ENCODE measurements at regions of chr11 and their contacts with region 1.

Region 1: GRCh38 chr11:123338330-123339005 is 91.6 kb upstream of the GRAMD1B start:
- DNase-seq: no peak
- ATAC-seq: peak; percentile 43
- H3K4me3 ChIP-seq: no peak overlapping the region
- H3K27ac ChIP-seq: no peak overlapping the region
- H3K4me1 ChIP-seq: no peaks in the 10 kb centered on the region
- H3K27me3 ChIP-seq: no peaks in the 10 kb centered on the region
- CTCF ChIP-seq: no peak
- EP300 ChIP-seq: no peak
- POLR2A ChIP-seq: no peak
- RAD21 ChIP-seq: no peak

Region 2: GRCh38 chr11:123286761-123287160 is 51.7 kb before region 1 on chr11:
- CTCF ChIA-PET with region 1: no interaction called
- POLR2A ChIA-PET with region 1: no interaction called
- RAD21 ChIA-PET with region 1: no interaction called
- SMC1A ChIA-PET with region 1: no interaction called
- in situ Hi-C with region 1: no loop called
- intact Hi-C with region 1: no loop called
- DNase-seq: no peak
- ATAC-seq: no peak
- H3K4me3 ChIP-seq: no peak overlapping the region
- H3K27ac ChIP-seq: no peak overlapping the region
- H3K4me1 ChIP-seq: no peaks in the 10 kb centered on the region
- H3K27me3 ChIP-seq: peaks cover 0 to 1% of the 10 kb centered on the region in 2 experiments; a peak in 1 of 4 replicates
- CTCF ChIP-seq: no peak
- EP300 ChIP-seq: no peak
- POLR2A ChIP-seq: no peak
- RAD21 ChIP-seq: no peak

Region 3: GRCh38 chr11:123351375-123351774 is 12.9 kb after region 1 on chr11:
- CTCF ChIA-PET with region 1: interaction called, 4 read pairs
- POLR2A ChIA-PET with region 1: interaction called, 3 read pairs
- RAD21 ChIA-PET with region 1: no interaction called
- SMC1A ChIA-PET with region 1: interaction called, 12 read pairs
- in situ Hi-C with region 1: no loop called
- intact Hi-C with region 1: no loop called
- DNase-seq: no peak
- ATAC-seq: no peak
- H3K4me3 ChIP-seq: no peak overlapping the region
- H3K27ac ChIP-seq: no peak overlapping the region
- H3K4me1 ChIP-seq: no peaks in the 10 kb centered on the region
- H3K27me3 ChIP-seq: no peaks in the 10 kb centered on the region
- CTCF ChIP-seq: no peak
- EP300 ChIP-seq: no peak
- POLR2A ChIP-seq: no peak
- RAD21 ChIP-seq: no peak

Region 4: GRCh38 chr11:123373754-123374621 is 35.5 kb after region 1 on chr11:
- CTCF ChIA-PET with region 1: no interaction called
- POLR2A ChIA-PET with region 1: no interaction called
- RAD21 ChIA-PET with region 1: no interaction called
- SMC1A ChIA-PET with region 1: no interaction called
- in situ Hi-C with region 1: no loop called
- intact Hi-C with region 1: no loop called
- DNase-seq: no peak
- ATAC-seq: peak; percentile 55
- H3K4me3 ChIP-seq: no peak overlapping the region
- H3K27ac ChIP-seq: no peak overlapping the region; the same call in 1 of the 2 replicates
- H3K4me1 ChIP-seq: peaks cover 11% of the 10 kb centered on the region; the same call in 1 of the 2 replicates
- H3K27me3 ChIP-seq: no peaks in the 10 kb centered on the region
- CTCF ChIP-seq: no peak
- EP300 ChIP-seq: no peak
- POLR2A ChIP-seq: no peak
- RAD21 ChIP-seq: no peak

Region 5: DNA sequence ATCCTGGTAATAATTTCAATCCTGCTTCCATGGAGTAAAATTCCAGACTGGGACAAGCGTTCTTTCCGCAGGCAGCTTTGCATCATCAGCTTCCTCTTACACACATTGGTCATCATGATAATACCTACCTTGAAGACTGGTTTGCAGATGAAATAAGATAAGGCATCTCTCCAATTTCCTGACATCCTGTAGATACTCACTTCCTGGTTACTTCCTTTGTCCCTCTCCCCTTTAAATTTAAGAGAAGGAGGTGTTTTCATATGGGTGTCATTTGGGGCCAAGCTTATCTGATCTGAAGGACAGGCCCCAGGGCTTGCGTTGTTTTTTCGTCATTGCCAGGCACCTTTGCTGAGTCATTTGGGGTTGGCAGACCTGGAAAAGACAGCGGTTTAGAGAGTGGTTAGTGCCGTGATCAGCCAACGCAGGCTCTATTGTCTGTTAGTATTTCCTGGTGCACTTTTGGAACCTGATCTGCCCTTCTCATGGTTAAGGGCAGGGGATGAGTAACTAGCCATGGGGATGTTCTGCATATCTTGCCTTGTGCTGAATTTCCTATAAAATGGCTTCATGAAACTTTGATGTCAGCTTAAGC is 115.7 kb after region 1 on chr11:
- CTCF ChIA-PET with region 1: no interaction called
- POLR2A ChIA-PET with region 1: no interaction called
- RAD21 ChIA-PET with region 1: no interaction called
- SMC1A ChIA-PET with region 1: no interaction called
- in situ Hi-C with region 1: no loop called
- intact Hi-C with region 1: no loop called
- DNase-seq: no peak
- ATAC-seq: peak; percentile 48
- H3K4me3 ChIP-seq: no peak overlapping the region
- H3K27ac ChIP-seq: peak overlapping the region; percentile 15; the same call in 1 of the 2 replicates
- H3K4me1 ChIP-seq: peaks cover 42% of the 10 kb centered on the region
- H3K27me3 ChIP-seq: no peaks in the 10 kb centered on the region
- CTCF ChIP-seq: no peak
- EP300 ChIP-seq: no peak
- POLR2A ChIP-seq: no peak
- RAD21 ChIP-seq: no peak